Panc1 (cell line): ENCODE measurements at regions of chr20 and their contacts with region 1.

Region 1: GRCh38 chr20:32610472-32611218 is 25.5 kb upstream of the NOL4L start:
- DNase-seq: no peak
- ATAC-seq: no peak
- H3K4me3 ChIP-seq: no peak overlapping the region
- H3K27ac ChIP-seq: no peak overlapping the region
- H3K4me1 ChIP-seq: no peaks in the 10 kb centered on the region
- H3K27me3 ChIP-seq: no peaks in the 10 kb centered on the region
- CTCF ChIP-seq: no peak

Region 2: GRCh38 chr20:31560094-31560899 is 1050.3 kb before region 1 on chr20:
- CTCF ChIA-PET with region 1: no interaction called
- POLR2A ChIA-PET with region 1: no interaction called
- in situ Hi-C with region 1: no loop called
- intact Hi-C with region 1: no loop called
- DNase-seq: peak; percentile 84
- ATAC-seq: peak; percentile 56
- H3K4me3 ChIP-seq: no peak overlapping the region
- H3K27ac ChIP-seq: peak overlapping the region; percentile 88
- H3K4me1 ChIP-seq: peaks cover 37% of the 10 kb centered on the region
- H3K27me3 ChIP-seq: no peaks in the 10 kb centered on the region
- CTCF ChIP-seq: peak; percentile 100

Region 3: GRCh38 chr20:32183947-32184635 is 426.6 kb before region 1 on chr20:
- CTCF ChIA-PET with region 1: no interaction called
- POLR2A ChIA-PET with region 1: interaction called, 10 read pairs
- in situ Hi-C with region 1: no loop called
- intact Hi-C with region 1: no loop called
- DNase-seq: no peak
- ATAC-seq: no peak
- H3K4me3 ChIP-seq: no peak overlapping the region
- H3K27ac ChIP-seq: no peak overlapping the region
- H3K4me1 ChIP-seq: no peaks in the 10 kb centered on the region
- H3K27me3 ChIP-seq: no peaks in the 10 kb centered on the region
- CTCF ChIP-seq: no peak